Astrocyte of the cerebellum (primary cell): ENCODE measurements at regions of chr1 and their contacts with region 1.

Region 1: GRCh38 chr1:177864538-177865305 is 105.1 kb downstream of the SEC16B start:
- DNase-seq: no peak
- H3K4me3 ChIP-seq: no peak overlapping the region
- CTCF ChIP-seq: no peak

Region 2: GRCh38 chr1:177824508-177824982 is 40.2 kb before region 1 on chr1:
- in situ Hi-C with region 1: loop called (anchors 5 kb)
- DNase-seq: no peak
- H3K4me3 ChIP-seq: no peak overlapping the region
- CTCF ChIP-seq: no peak

Region 3: GRCh38 chr1:177937931-177938330 is 73.2 kb after region 1 on chr1:
- in situ Hi-C with region 1: no loop called
- DNase-seq: peak; percentile 35
- H3K4me3 ChIP-seq: no peak overlapping the region
- CTCF ChIP-seq: no peak